H1 (cell line): ENCODE measurements at regions of chr17 and their contacts with region 1.

Region 1: GRCh38 chr17:75271233-75271954 is 363 bp upstream of the MIF4GD start:
- DNase-seq: peak in 1 of 2 experiments; percentile 88
- H3K4me3 ChIP-seq: peak overlapping the region; percentile 84 to 91 (median 87)
- H3K27ac ChIP-seq: 0 out of 2 replicates have a peak overlapping the region, but pooled peaks have one; percentile 11
- H3K4me1 ChIP-seq: peaks cover 0 to 9% (median 7%) of the 10 kb centered on the region in 4 experiments; a peak in 4 of 7 replicates
- H3K27me3 ChIP-seq: no peaks in the 10 kb centered on the region
- CTCF ChIP-seq: peak; percentile 80 to 87 (median 86)
- EP300 ChIP-seq: no peak
- POLR2A ChIP-seq: peak in 1 of 2 experiments; percentile 16; a peak in 1 of 3 replicates
- RAD21 ChIP-seq: peak in 1 of 2 experiments; percentile 44; a peak in 2 of 4 replicates

Region 2: GRCh38 chr17:74467221-74467951 is 804.0 kb before region 1 on chr17:
- CTCF ChIA-PET with region 1: no interaction called
- POLR2A ChIA-PET with region 1: no interaction called
- DNase-seq: no peak
- H3K4me3 ChIP-seq: peak overlapping the region; percentile 27 to 68 (median 39); a peak in 7 of 8 replicates
- H3K27ac ChIP-seq: no peak overlapping the region
- H3K4me1 ChIP-seq: peaks cover 0 to 9% (median 2%) of the 10 kb centered on the region in 4 experiments; a peak in 2 of 7 replicates
- H3K27me3 ChIP-seq: peaks cover 3 to 25% (median 22%) of the 10 kb centered on the region in 4 experiments
- CTCF ChIP-seq: no peak
- EP300 ChIP-seq: no peak
- POLR2A ChIP-seq: no peak
- RAD21 ChIP-seq: no peak

Region 3: DNA sequence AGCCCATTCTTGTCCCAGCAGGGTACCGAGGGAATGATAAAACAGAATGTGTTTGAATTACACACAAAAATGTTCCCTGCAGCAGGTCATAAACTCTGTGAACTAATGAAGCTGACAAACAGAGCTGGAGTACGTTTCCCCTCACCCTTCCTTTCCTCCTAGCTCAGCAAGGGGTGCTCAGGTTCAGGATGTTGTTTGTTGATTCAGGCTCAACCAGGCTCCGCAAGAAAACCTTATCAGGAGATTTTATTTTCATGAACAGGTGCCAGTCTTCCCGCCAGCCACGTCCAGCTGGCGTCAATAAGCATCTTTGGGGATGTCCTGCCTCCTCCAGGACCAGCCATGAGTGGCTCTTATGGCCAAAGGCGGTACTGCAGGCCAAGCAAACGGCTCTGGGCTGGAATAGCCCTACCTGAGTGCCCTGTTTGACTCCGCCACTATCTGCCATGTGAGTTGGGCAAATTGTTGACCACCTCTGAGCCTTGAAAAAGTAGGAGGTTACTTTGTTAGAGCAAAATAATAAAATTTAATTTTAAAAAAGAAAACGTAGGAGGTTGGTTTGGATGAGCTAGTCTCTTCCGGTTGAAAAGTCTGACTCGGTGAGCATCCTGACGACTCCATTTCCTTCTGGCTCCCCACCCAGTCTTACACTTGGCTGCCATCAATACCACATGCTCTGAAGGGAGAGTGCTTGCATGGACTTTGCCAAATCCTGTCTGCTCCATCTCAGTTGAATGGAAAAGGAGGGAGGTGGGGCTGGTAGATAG is 165.6 kb before region 1 on chr17:
- CTCF ChIA-PET with region 1: no interaction called
- POLR2A ChIA-PET with region 1: no interaction called
- DNase-seq: peak in 1 of 2 experiments; percentile 81
- H3K4me3 ChIP-seq: no peak overlapping the region
- H3K27ac ChIP-seq: no peak overlapping the region
- H3K4me1 ChIP-seq: peaks cover 0 to 2% (median under 1%) of the 10 kb centered on the region in 4 experiments; a peak in 2 of 7 replicates
- H3K27me3 ChIP-seq: no peaks in the 10 kb centered on the region
- CTCF ChIP-seq: peak; percentile 75 to 87 (median 86)
- EP300 ChIP-seq: no peak
- POLR2A ChIP-seq: no peak
- RAD21 ChIP-seq: peak; percentile 58 to 63

Region 4: GRCh38 chr17:75289115-75289831 is 17.9 kb after region 1 on chr17 and contains the start of gene SLC25A19:
- CTCF ChIA-PET with region 1: interaction called, 30 read pairs
- POLR2A ChIA-PET with region 1: interaction called, 12 read pairs
- DNase-seq: peak; percentile 94 to 98
- H3K4me3 ChIP-seq: peak within 1 kb of the TSS; percentile 77 to 94 (median 82)
- H3K27ac ChIP-seq: no peak within 1 kb of the TSS
- H3K4me1 ChIP-seq: no peaks in the 10 kb centered on the region; a peak in 3 of 7 replicates
- H3K27me3 ChIP-seq: no peaks in the 10 kb centered on the region; a peak in 2 of 7 replicates
- CTCF ChIP-seq: peak; percentile 57 to 83 (median 69)
- EP300 ChIP-seq: no peak
- POLR2A ChIP-seq: peak in 1 of 2 experiments; percentile 83; a peak in 2 of 3 replicates
- RAD21 ChIP-seq: peak; percentile 63 to 72
- total RNA-seq, gene SLC25A19: 28.6 and 33.3 TPM in 2 replicates

Region 5: DNA sequence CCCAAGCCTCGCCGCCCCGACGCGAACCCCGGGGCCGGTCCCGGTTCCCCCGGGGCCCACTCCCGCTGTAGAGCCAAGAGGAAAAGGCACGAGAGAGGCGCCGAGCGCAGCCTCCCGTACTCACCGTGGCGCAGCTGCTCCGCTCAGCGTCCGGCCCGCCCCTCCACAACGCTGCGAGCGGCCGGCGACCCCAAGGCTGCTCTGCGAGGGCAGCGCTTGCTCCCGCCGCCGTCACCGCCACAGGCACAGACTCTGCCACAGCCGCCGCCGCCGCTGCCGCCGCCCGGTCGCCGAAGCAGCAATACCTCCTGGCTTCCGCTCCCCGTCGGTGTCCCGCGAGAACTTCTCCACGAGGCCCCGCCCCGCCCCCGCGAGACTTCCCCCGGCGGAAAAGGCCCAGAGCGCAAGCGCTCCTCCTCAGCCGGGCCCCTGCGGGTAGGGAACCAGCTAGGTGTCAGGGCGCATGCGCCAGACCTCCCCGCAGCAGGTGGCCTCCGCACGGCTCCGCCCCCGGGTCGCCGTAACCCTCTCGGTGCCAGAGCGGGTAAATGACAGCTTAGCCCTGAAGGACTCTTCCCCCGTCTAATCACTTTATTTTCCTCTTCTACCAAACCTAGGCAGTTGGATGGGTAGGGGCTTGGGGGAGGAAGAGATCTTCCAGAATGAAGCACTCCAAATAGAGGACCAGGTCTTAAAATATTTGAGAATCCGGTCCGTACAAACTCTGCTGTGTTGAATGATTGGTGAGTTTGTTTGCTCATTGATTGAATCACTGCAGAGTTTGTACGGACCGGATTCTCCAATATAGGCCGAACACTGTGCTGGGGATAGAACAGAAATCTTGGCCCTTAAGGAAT is 134.2 kb after region 1 on chr17 and contains the start of gene GRB2:
- CTCF ChIA-PET with region 1: interaction called, 8 read pairs
- POLR2A ChIA-PET with region 1: interaction called, 14 read pairs
- DNase-seq: peak; percentile 84 to 100
- H3K4me3 ChIP-seq: peak within 1 kb of the TSS; percentile 90 to 94 (median 92)
- H3K27ac ChIP-seq: no peak within 1 kb of the TSS
- H3K4me1 ChIP-seq: no peaks in the 10 kb centered on the region
- H3K27me3 ChIP-seq: no peaks in the 10 kb centered on the region
- CTCF ChIP-seq: no peak
- EP300 ChIP-seq: no peak
- POLR2A ChIP-seq: peak in 1 of 2 experiments; percentile 73; a peak in 2 of 3 replicates
- RAD21 ChIP-seq: no peak
- total RNA-seq, gene GRB2: 101 and 102 TPM in 2 replicates

Region 6: GRCh38 chr17:75412455-75413317 is 141.3 kb after region 1 on chr17:
- CTCF ChIA-PET with region 1: interaction called, 21 read pairs
- POLR2A ChIA-PET with region 1: interaction called, 6 read pairs
- DNase-seq: peak in 1 of 2 experiments; percentile 86
- H3K4me3 ChIP-seq: no peak overlapping the region
- H3K27ac ChIP-seq: no peak overlapping the region
- H3K4me1 ChIP-seq: no peaks in the 10 kb centered on the region
- H3K27me3 ChIP-seq: no peaks in the 10 kb centered on the region
- CTCF ChIP-seq: peak; percentile 70 to 95 (median 87)
- EP300 ChIP-seq: no peak
- POLR2A ChIP-seq: no peak
- RAD21 ChIP-seq: peak; percentile 94 to 98